HepG2 (cell line): ENCODE measurements at regions of chr2 and their contacts with region 1.

Region 1: DNA sequence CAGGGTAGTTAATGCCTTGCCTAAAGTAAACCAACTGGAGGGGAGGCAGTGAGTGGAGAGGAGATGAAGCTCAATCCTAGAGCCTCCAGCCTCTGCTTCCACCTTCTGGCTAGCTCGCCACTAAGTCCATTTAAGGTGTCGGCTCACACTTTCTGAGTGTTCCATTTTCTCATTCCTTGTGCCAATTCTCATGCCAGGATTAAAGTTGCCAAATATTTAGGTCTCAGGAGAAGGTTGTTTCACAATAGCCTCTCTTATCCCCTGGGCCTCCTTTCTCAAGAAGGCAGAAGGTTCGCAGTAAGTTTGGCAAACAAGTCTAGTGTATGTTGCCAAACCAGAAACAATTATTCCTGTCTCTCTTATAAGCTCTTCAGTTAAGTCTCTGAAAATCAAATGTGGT is 57.2 kb downstream of the TACR1 start:
- DNase-seq: no peak
- ATAC-seq: no peak
- H3K4me3 ChIP-seq: no peak overlapping the region
- H3K27ac ChIP-seq: no peak overlapping the region
- H3K4me1 ChIP-seq: peaks cover 15% of the 10 kb centered on the region; the same call in 1 of the 2 replicates
- H3K27me3 ChIP-seq: no peaks in the 10 kb centered on the region
- CTCF ChIP-seq: no peak
- EP300 ChIP-seq: no peak
- POLR2A ChIP-seq: no peak
- RAD21 ChIP-seq: no peak

Region 2: DNA sequence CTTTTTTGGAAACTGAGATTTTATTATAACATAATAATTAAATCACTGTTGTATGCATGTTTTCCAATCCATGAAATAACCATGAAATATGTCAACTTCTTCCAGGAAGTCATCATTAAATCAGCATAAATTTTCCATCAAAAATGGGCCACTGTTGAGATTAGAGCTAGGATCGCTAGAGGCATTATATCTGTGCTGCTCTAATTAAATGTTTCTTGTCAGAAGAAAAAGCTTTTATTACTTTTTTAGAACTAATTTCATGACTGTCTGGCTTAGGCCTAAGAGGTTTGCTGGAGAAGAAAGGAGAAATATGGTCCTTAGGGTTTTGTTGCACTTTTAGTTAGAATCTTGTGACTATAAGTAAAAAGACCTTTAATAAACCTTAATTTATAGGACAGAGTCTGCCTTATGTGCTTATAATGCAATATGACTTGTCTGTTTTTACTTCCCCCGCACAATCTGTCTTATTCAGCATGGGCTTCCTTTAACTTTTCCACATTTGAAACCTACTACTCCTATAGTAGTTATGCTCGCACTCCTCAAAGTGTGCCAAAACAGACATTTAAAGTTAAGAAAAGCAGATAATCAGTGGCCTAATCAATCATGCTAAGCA is 932.0 kb after region 1 on chr2:
- CTCF ChIA-PET with region 1: no interaction called
- POLR2A ChIA-PET with region 1: no interaction called
- in situ Hi-C with region 1: no loop called
- intact Hi-C with region 1: loop called (anchors 5 kb)
- DNase-seq: no peak
- ATAC-seq: no peak
- H3K4me3 ChIP-seq: no peak overlapping the region
- H3K27ac ChIP-seq: no peak overlapping the region
- H3K4me1 ChIP-seq: no peaks in the 10 kb centered on the region
- H3K27me3 ChIP-seq: no peaks in the 10 kb centered on the region
- CTCF ChIP-seq: no peak
- EP300 ChIP-seq: no peak
- POLR2A ChIP-seq: no peak
- RAD21 ChIP-seq: no peak